ENCODE measurements at regions of chr7 and their contacts with region 1.

Region 1: GRCh38 chr7:105876091-105876963 is at the start of gene ATXN7L1:
- DNase-seq: peak; percentile 96
- ATAC-seq: peak; percentile 96
- total RNA-seq, gene ATXN7L1: 5.3 TPM

Region 2: GRCh38 chr7:105838627-105839231 is 37.6 kb before region 1 on chr7:
- intact Hi-C with region 1: no loop called
- DNase-seq: peak; percentile 55
- ATAC-seq: peak; percentile 20

Region 3: GRCh38 chr7:106056513-106057203 is 180.3 kb after region 1 on chr7:
- intact Hi-C with region 1: no loop called
- DNase-seq: peak; percentile 73
- ATAC-seq: peak; percentile 97

Region 4: DNA sequence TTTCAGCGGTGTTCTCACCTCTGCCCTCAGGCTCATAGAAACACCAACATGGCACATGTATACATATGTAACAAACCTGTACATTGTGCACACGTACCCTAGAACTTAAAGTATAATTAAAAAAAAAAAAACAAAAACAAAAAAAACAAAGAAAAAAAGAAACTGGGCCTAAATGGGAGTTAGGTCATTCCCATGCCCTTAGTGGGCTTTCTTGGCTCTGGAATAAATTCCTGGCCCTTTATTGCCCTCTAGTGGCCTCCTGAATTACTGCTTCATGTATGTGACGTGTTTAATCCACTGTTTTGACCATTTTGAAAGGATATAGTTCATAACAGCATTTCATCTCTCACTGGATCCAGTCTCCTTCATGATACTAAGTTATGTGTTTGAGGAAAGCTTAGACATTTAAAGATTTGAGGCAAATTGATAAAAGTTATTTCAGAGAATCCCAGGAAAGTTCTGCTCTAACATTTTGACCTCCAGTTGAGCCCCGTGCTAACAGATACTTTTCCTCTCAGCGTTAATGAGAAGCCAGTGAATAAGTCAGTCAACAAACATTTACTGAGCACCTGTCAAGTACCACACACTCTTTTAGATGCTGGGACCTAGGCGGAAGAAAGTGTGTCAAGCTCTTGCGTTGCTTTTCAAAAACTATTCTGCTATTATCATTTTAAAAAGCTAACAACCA is 290.5 kb after region 1 on chr7:
- intact Hi-C with region 1: loop called (anchors 10 kb)
- DNase-seq: no peak
- ATAC-seq: peak; percentile 85